ENCODE measurements at regions of chr21 and their contacts with region 1.

Region 1: DNA sequence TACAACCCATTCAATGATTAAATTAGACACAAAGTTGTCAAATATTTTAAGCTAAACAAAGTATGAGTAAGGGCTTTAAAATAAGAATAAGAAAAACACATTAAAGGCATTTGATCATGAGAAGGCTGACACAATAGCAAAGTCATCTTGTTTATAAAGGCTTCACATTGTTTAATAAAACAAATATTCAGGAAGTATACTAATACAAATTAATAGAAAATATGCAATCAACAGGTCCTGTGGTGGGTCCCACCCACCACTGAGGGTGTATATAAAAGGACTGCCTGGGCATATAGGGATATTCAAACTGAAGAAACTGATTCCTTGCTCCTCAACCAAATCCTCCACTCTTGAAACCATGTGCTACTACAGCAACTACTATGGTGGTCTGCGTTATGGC is at the start of gene KRTAP20-2:
- DNase-seq: no peak
- H3K27ac ChIP-seq: no peak within 1 kb of the TSS
- CTCF ChIP-seq: no peak

Region 2: DNA sequence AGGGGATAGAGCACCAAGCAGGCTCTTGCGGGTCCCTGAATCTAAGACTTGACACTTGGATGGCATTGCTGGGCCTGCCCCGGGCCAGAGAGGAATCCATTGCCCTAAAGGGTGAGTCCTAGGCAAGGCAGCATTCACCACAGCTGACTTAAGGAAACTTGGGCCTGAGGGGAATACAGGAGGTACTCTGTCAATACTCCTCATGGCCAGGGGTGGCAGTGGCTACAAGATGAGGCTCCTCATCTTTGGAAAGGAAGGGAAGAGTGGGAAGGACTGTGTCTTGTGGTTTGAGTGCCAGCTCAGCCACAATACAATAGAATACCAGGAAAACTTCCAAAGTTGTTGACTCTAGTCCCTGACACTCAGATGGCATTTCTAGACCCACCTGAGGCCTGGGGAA is 28.9 kb before region 1 on chr21:
- CTCF ChIA-PET with region 1: no interaction called
- POLR2A ChIA-PET with region 1: no interaction called
- DNase-seq: no peak
- H3K27ac ChIP-seq: no peak overlapping the region
- CTCF ChIP-seq: no peak

Region 3: DNA sequence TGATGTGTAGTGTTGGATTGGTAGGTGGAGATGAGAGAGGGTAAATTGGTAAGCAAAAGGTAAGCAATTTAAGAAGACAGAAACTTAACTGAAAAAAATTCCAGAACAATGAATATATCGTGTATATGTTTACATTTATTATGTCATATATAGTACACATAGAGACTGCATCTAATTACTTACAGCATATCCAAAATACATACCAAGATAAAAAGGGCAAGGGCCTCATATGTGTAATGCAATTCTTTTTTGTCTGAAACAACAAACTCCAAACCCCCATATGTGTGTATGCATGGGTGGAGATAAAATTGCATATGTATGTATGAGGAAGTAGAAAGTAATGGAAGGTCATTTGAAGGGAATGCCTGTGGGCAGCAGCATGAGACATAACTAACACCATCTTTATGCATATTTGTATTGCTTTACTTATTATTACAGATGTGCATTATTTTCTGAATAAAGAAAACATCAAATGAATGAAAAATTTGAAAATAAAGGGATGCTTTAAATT is 12.1 kb after region 1 on chr21:
- CTCF ChIA-PET with region 1: interaction called, 10 read pairs
- POLR2A ChIA-PET with region 1: no interaction called
- DNase-seq: no peak
- H3K27ac ChIP-seq: no peak overlapping the region
- CTCF ChIP-seq: no peak

Region 4: DNA sequence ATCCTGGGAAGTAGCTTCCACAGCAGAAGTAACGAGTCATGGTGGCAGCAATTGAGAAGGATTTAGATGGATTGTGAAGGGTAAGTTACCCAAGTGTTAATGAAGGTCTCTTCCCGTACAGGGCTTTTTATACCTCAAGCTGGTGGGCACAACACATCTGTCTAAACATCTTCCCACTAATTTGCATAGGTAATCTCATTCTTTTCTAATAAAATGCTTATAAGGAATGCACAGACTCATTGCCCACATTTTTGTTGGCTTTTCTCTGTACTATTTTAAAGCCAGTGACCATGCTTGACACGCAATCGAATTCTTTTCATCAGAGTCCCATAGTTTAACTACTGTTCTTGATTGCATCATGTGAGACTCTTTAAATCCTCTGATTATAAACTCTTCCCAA is 194.8 kb after region 1 on chr21 and contains the start of gene KRTAP7-1:
- CTCF ChIA-PET with region 1: no interaction called
- POLR2A ChIA-PET with region 1: no interaction called
- DNase-seq: no peak
- H3K27ac ChIP-seq: no peak within 1 kb of the TSS
- CTCF ChIP-seq: no peak

Measured in RWPE1 (cell line).